H1 (cell line): ENCODE measurements at regions of chr22 and their contacts with region 1.

Region 1: GRCh38 chr22:23098718-23099530 is 28.6 kb downstream of the GNAZ start:
- DNase-seq: no peak
- H3K4me3 ChIP-seq: no peak overlapping the region
- H3K27ac ChIP-seq: no peak overlapping the region
- H3K4me1 ChIP-seq: no peaks in the 10 kb centered on the region
- H3K27me3 ChIP-seq: no peaks in the 10 kb centered on the region
- CTCF ChIP-seq: no peak
- EP300 ChIP-seq: no peak
- POLR2A ChIP-seq: no peak
- RAD21 ChIP-seq: no peak

Region 2: GRCh38 chr22:23058481-23059283 is 40.2 kb before region 1 on chr22:
- CTCF ChIA-PET with region 1: no interaction called
- POLR2A ChIA-PET with region 1: no interaction called
- DNase-seq: no peak
- H3K4me3 ChIP-seq: no peak overlapping the region
- H3K27ac ChIP-seq: no peak overlapping the region
- H3K4me1 ChIP-seq: no peaks in the 10 kb centered on the region
- H3K27me3 ChIP-seq: peaks cover 0 to 4% (median 2%) of the 10 kb centered on the region in 4 experiments; a peak in 4 of 7 replicates
- CTCF ChIP-seq: no peak
- EP300 ChIP-seq: no peak
- POLR2A ChIP-seq: no peak
- RAD21 ChIP-seq: no peak

Region 3: DNA sequence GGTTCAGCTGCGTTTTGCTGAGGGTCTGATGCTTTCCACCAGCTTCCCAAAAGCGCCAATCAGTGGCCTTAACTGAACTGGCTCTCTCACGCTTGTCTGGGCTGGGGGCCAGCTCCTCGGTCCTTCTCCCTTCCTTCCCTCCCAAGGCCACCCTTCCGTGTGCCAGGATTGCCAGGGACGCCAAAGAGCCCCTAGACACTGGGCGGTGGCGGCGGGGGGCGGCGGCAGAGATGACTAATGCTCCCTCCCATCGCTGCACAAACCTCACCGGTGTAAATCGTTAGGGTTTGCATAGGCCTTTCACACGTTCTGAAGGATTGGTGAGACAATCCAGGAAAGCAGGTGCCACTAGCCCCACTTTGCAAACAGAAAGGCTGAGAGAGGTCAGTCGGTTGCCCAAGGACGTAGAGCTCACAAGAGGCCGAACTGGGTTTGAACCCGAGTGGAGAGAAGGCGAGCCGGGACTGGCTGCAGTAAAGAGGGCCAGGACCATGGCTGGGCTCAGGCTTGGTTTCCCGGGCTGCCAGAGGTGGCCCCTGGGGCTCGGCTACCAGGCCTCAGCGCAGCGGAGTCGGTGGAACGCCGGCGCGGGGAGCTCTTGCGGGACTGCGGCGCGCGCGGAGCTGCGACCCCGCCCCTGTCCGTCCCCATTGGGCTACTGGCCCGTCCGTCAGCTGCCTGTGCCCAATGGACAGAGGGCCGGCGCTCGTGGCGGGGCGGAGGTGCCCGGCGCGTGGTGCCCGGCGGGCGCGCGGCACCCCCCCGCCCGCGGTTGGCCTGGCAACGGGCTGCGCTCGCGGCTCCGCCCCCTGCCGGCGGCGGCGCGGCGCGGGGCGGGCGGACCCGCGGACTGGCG is 29.2 kb before region 1 on chr22:
- CTCF ChIA-PET with region 1: interaction called, 25 read pairs
- POLR2A ChIA-PET with region 1: no interaction called
- DNase-seq: peak; percentile 41 to 96
- H3K4me3 ChIP-seq: peak overlapping the region; percentile 53 to 75 (median 62)
- H3K27ac ChIP-seq: no peak overlapping the region
- H3K4me1 ChIP-seq: peaks cover 0 to 10% (median 5%) of the 10 kb centered on the region in 4 experiments; a peak in 5 of 7 replicates
- H3K27me3 ChIP-seq: peaks cover 6 to 42% (median 37%) of the 10 kb centered on the region in 4 experiments
- CTCF ChIP-seq: no peak
- EP300 ChIP-seq: no peak
- POLR2A ChIP-seq: no peak
- RAD21 ChIP-seq: no peak

Region 4: GRCh38 chr22:23113067-23113846 is 14.3 kb after region 1 on chr22:
- CTCF ChIA-PET with region 1: interaction called, 11 read pairs
- POLR2A ChIA-PET with region 1: no interaction called
- DNase-seq: no peak
- H3K4me3 ChIP-seq: no peak overlapping the region
- H3K27ac ChIP-seq: no peak overlapping the region
- H3K4me1 ChIP-seq: peaks cover 0 to 10% (median 4%) of the 10 kb centered on the region in 4 experiments; a peak in 3 of 7 replicates
- H3K27me3 ChIP-seq: peaks cover 0 to 3% (median 0%) of the 10 kb centered on the region in 4 experiments; a peak in 3 of 7 replicates
- CTCF ChIP-seq: no peak
- EP300 ChIP-seq: no peak
- POLR2A ChIP-seq: no peak
- RAD21 ChIP-seq: no peak

Region 5: DNA sequence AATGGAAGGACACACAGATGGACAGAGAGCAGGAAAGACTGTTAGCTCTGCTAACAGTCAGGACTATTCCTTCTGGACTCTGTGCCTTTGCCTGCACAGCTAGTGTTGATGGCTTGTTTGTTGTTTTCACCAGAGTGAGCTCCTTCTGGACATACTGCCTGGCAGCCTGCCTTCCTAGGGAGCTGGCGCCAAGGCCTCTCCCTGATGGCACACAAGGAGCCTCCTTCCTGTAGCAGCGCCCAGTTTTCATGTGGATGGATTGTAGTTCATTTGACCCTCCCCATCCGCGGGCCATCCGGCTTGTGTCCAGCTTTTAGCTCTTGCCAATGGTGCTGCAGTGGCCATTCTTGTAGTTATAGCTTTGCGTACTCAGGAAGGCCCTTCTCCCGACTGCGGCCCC is 64.7 kb after region 1 on chr22:
- CTCF ChIA-PET with region 1: no interaction called
- POLR2A ChIA-PET with region 1: no interaction called
- DNase-seq: no peak
- H3K4me3 ChIP-seq: no peak overlapping the region
- H3K27ac ChIP-seq: no peak overlapping the region
- H3K4me1 ChIP-seq: peaks cover 0 to 12% (median 7%) of the 10 kb centered on the region in 4 experiments; a peak in 5 of 7 replicates
- H3K27me3 ChIP-seq: no peaks in the 10 kb centered on the region
- CTCF ChIP-seq: no peak
- EP300 ChIP-seq: no peak
- POLR2A ChIP-seq: no peak
- RAD21 ChIP-seq: no peak